Naive thymus-derived CD4-positive, alpha-beta T cell (primary cell): ENCODE measurements at regions of chr3 and their contacts with region 1.

Region 1: GRCh38 chr3:188049606-188050530 is 104.1 kb upstream of the LPP start:
- DNase-seq: peak in 5 of 9 donors; percentile 16 to 37 (median 24)
- ATAC-seq: peak; percentile 85
- H3K4me3 ChIP-seq: no peak overlapping the region
- H3K4me3 Mint-ChIP-seq: peak overlapping the region in 8 of 10 donors; percentile 3 to 56 (median 26)
- H3K27ac ChIP-seq: no peak overlapping the region
- H3K27ac Mint-ChIP-seq: peak overlapping the region in 7 of 9 donors; percentile 7 to 57 (median 34)
- H3K4me1 ChIP-seq: peaks cover 9 to 10% of the 10 kb centered on the region in 2 donors
- H3K4me1 Mint-ChIP-seq: peaks cover 13 to 32% (median 27%) of the 10 kb centered on the region in 7 donors
- H3K27me3 ChIP-seq: no peaks in the 10 kb centered on the region
- H3K27me3 Mint-ChIP-seq: peaks cover 0 to 4% (median 0%) of the 10 kb centered on the region in 5 donors

Region 2: GRCh38 chr3:188000361-188000861 is 49.5 kb before region 1 on chr3:
- CTCF ChIA-PET with region 1: no interaction called
- POLR2A ChIA-PET with region 1: interaction called, 3 read pairs
- intact Hi-C with region 1: loop called in 1 of 2 experiments (anchors 5 kb)
- DNase-seq: no peak
- ATAC-seq: no peak
- H3K4me3 ChIP-seq: peak overlapping the region; percentile 13
- H3K4me3 Mint-ChIP-seq: peak overlapping the region; percentile 42 to 83 (median 77)
- H3K27ac ChIP-seq: no peak overlapping the region
- H3K27ac Mint-ChIP-seq: peak overlapping the region; percentile 27 to 94 (median 85)
- H3K4me1 ChIP-seq: peaks cover 26 to 37% of the 10 kb centered on the region in 2 donors
- H3K4me1 Mint-ChIP-seq: peaks cover 41 to 75% (median 64%) of the 10 kb centered on the region in 7 donors
- H3K27me3 ChIP-seq: no peaks in the 10 kb centered on the region
- H3K27me3 Mint-ChIP-seq: no peaks in the 10 kb centered on the region

Region 3: GRCh38 chr3:188026191-188026968 is 23.5 kb before region 1 on chr3:
- CTCF ChIA-PET with region 1: no interaction called
- POLR2A ChIA-PET with region 1: no interaction called
- intact Hi-C with region 1: no loop called
- DNase-seq: no peak
- ATAC-seq: no peak
- H3K4me3 ChIP-seq: no peak overlapping the region
- H3K4me3 Mint-ChIP-seq: no peak overlapping the region
- H3K27ac ChIP-seq: no peak overlapping the region
- H3K27ac Mint-ChIP-seq: no peak overlapping the region
- H3K4me1 ChIP-seq: no peaks in the 10 kb centered on the region
- H3K4me1 Mint-ChIP-seq: peaks cover 0 to 7% (median 0%) of the 10 kb centered on the region in 7 donors
- H3K27me3 ChIP-seq: no peaks in the 10 kb centered on the region
- H3K27me3 Mint-ChIP-seq: peaks cover 0 to 2% (median 0%) of the 10 kb centered on the region in 5 donors